GM12878 (cell line): ENCODE measurements at regions of chrX and their contacts with region 1.

Region 1: DNA sequence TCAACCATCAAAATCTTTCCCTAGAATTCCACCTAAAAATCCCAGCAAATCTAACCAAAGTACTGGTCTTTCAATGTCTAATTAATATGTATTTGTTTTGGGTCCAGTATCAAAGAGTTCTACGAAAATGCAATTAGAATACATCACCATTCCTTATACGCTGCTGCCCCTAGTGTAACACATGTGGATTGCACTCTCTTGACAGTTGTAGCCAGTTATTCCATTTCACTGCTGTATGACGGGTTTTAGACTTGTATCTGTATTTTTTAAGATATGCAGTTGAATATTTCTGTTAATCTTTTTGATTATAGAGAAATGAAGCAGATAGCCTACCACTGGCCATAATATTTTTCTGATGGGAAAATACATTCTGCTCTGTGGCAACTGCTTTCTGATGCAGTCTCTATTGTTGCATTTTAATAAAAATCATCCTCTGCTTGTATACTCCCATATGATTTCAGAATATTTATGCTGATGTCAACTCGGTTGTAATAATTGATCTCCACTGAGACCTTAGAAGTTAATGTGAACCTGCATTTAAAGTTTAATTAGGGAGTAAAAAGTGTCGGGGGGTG is 17.1 kb upstream of the PAGE2B start:
- DNase-seq: no peak
- ATAC-seq: peak; percentile 83
- H3K4me3 ChIP-seq: no peak overlapping the region
- H3K27ac ChIP-seq: no peak overlapping the region
- H3K4me1 ChIP-seq: no peaks in the 10 kb centered on the region
- H3K27me3 ChIP-seq: no peaks in the 10 kb centered on the region
- CTCF ChIP-seq: peak; percentile 76 to 84 (median 76)
- EP300 ChIP-seq: no peak
- POLR2A ChIP-seq: no peak
- RAD21 ChIP-seq: peak; percentile 84

Region 2: GRCh38 chrX:54825716-54826438 is 231.9 kb before region 1 on chrX:
- CTCF ChIA-PET with region 1: no interaction called
- POLR2A ChIA-PET with region 1: no interaction called
- RAD21 ChIA-PET with region 1: no interaction called
- SMC1A ChIA-PET with region 1: no interaction called
- in situ Hi-C with region 1: no loop called
- intact Hi-C with region 1: loop called (anchors 2 kb)
- DNase-seq: no peak
- ATAC-seq: peak; percentile 55
- H3K4me3 ChIP-seq: no peak overlapping the region
- H3K27ac ChIP-seq: no peak overlapping the region
- H3K4me1 ChIP-seq: no peaks in the 10 kb centered on the region
- H3K27me3 ChIP-seq: no peaks in the 10 kb centered on the region
- CTCF ChIP-seq: peak in 2 of 3 experiments; percentile 11 to 21; a peak in 1 of 6 replicates
- EP300 ChIP-seq: no peak
- POLR2A ChIP-seq: no peak
- RAD21 ChIP-seq: 0 out of 2 replicates have a peak, but pooled peaks have one; percentile 23

Region 3: GRCh38 chrX:54865208-54865607 is 192.6 kb before region 1 on chrX:
- CTCF ChIA-PET with region 1: no interaction called
- POLR2A ChIA-PET with region 1: no interaction called
- RAD21 ChIA-PET with region 1: no interaction called
- SMC1A ChIA-PET with region 1: no interaction called
- in situ Hi-C with region 1: no loop called
- intact Hi-C with region 1: no loop called
- DNase-seq: no peak
- ATAC-seq: no peak
- H3K4me3 ChIP-seq: no peak overlapping the region
- H3K27ac ChIP-seq: no peak overlapping the region
- H3K4me1 ChIP-seq: no peaks in the 10 kb centered on the region
- H3K27me3 ChIP-seq: no peaks in the 10 kb centered on the region
- CTCF ChIP-seq: no peak
- EP300 ChIP-seq: no peak
- POLR2A ChIP-seq: no peak
- RAD21 ChIP-seq: no peak

Region 4: GRCh38 chrX:54891573-54891972 is 166.2 kb before region 1 on chrX:
- CTCF ChIA-PET with region 1: interaction called, 11 read pairs
- POLR2A ChIA-PET with region 1: no interaction called
- RAD21 ChIA-PET with region 1: interaction called, 9 read pairs
- SMC1A ChIA-PET with region 1: no interaction called
- in situ Hi-C with region 1: no loop called
- intact Hi-C with region 1: loop called (anchors 1 kb)
- DNase-seq: no peak
- ATAC-seq: peak; percentile 72
- H3K4me3 ChIP-seq: no peak overlapping the region
- H3K27ac ChIP-seq: no peak overlapping the region
- H3K4me1 ChIP-seq: no peaks in the 10 kb centered on the region
- H3K27me3 ChIP-seq: no peaks in the 10 kb centered on the region
- CTCF ChIP-seq: peak; percentile 49 to 58 (median 51); a peak in 5 of 6 replicates
- EP300 ChIP-seq: no peak
- POLR2A ChIP-seq: no peak
- RAD21 ChIP-seq: peak; percentile 67

Region 5: DNA sequence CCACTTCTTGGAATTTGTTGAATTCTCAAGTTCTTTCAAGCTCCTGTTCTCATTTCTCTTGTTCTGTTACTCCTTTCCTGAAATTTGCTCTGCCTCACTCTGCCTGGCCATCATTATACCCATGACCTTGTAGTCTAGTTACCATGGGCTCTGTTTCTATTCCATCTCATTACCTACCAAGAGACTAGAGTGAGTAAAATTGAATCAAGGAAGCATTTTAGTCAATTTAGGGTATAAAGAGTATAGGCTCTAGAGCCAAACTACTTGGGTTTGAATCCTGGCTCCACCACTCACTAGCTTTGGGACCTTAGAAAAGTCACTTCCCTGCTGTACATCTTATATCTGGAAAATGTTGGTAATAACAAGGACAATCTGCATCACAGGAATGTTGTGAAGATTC is 29.2 kb before region 1 on chrX:
- CTCF ChIA-PET with region 1: no interaction called
- POLR2A ChIA-PET with region 1: no interaction called
- RAD21 ChIA-PET with region 1: no interaction called
- SMC1A ChIA-PET with region 1: no interaction called
- in situ Hi-C with region 1: no loop called
- intact Hi-C with region 1: no loop called
- DNase-seq: no peak
- ATAC-seq: no peak
- H3K4me3 ChIP-seq: no peak overlapping the region
- H3K27ac ChIP-seq: no peak overlapping the region
- H3K4me1 ChIP-seq: no peaks in the 10 kb centered on the region
- H3K27me3 ChIP-seq: no peaks in the 10 kb centered on the region
- CTCF ChIP-seq: no peak
- EP300 ChIP-seq: no peak
- POLR2A ChIP-seq: no peak
- RAD21 ChIP-seq: no peak

Region 6: DNA sequence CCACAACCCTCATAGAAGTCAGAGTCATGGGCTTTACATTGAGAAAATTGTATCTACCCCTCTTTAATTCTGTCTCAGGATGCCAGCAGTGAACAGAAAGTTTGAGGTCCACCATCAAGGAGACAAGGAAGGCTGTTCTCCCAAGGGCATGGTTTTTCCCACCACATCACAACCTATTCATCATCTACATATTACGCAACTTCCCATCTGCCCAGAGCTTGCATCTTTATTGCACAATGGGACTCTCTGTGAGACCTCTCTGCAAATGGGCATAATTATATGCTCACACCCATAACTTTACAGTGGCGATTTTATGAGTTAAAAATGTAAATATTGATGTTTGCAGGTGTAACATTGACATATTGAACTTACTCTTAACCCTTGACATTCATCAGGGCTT is 69.9 kb after region 1 on chrX:
- CTCF ChIA-PET with region 1: no interaction called
- POLR2A ChIA-PET with region 1: no interaction called
- RAD21 ChIA-PET with region 1: no interaction called
- SMC1A ChIA-PET with region 1: no interaction called
- in situ Hi-C with region 1: no loop called
- intact Hi-C with region 1: no loop called
- DNase-seq: no peak
- ATAC-seq: no peak
- H3K4me3 ChIP-seq: no peak overlapping the region
- H3K27ac ChIP-seq: no peak overlapping the region
- H3K4me1 ChIP-seq: no peaks in the 10 kb centered on the region
- H3K27me3 ChIP-seq: no peaks in the 10 kb centered on the region
- CTCF ChIP-seq: no peak
- EP300 ChIP-seq: no peak
- POLR2A ChIP-seq: no peak
- RAD21 ChIP-seq: no peak

Region 7: DNA sequence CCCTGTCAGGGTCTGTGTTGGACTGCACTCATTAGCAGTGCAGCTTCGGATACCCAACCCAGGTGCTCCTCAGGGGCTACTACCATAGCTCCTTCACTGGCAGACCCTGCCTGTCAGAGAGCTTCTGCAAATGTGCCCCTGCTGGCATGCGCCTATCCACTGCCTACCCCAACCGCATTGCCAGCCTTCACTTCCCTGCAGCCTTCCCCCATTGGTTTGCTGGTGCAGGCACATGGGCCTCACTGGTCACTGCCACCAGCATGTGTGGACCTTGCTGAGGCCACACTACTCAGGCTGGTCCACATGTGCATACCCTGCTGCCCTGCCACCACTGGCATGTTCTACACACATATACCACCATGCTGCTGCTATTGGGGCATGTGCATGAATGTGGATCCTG is 321.6 kb after region 1 on chrX:
- CTCF ChIA-PET with region 1: no interaction called
- POLR2A ChIA-PET with region 1: no interaction called
- RAD21 ChIA-PET with region 1: no interaction called
- SMC1A ChIA-PET with region 1: no interaction called
- in situ Hi-C with region 1: no loop called
- intact Hi-C with region 1: no loop called
- DNase-seq: no peak
- ATAC-seq: no peak
- H3K4me3 ChIP-seq: no peak overlapping the region
- H3K27ac ChIP-seq: no peak overlapping the region
- H3K4me1 ChIP-seq: no peaks in the 10 kb centered on the region
- H3K27me3 ChIP-seq: no peaks in the 10 kb centered on the region
- CTCF ChIP-seq: no peak
- EP300 ChIP-seq: no peak
- POLR2A ChIP-seq: no peak
- RAD21 ChIP-seq: no peak